ENCODE measurements at regions of chr1 and their contacts with region 1.

Region 1: DNA sequence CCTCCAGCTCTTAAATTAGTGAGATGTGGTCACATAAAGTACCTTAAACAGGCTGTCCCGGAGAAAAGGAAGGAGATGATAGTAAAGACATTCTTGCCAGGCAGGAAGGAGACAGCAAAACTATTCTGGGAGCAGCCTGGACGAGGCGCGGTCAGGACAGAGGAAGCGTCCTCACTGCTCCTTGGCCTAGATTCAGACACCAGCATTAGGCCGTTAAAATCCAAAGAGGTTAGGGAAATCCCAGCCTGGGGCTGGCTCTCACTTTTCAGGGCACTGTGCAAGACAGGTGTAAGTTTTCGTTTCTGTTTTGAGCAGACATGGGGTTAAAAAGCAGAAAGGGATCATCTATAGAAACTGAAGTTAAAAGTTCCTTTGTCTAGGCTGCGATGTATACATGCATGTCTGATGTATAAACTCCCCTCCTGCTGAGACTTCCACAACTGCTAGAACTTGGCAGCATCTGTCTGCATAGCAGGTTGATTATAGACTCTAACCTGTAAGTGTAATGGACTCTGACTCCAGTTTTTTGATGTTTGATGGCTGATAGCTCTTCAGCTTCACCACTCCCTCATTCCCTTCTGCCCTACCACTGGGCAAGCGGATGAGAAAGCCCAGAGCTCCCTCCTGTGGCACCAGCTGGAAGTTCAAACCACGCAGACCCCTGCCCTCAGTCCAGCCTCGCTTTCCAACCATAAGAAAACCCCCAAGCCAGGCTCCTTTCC is 21.5 kb downstream of the STPG1 start:
- DNase-seq: peak; percentile 84
- ATAC-seq: peak; percentile 91
- H3K4me3 Mint-ChIP-seq: no peak overlapping the region
- H3K27ac Mint-ChIP-seq: no peak overlapping the region
- H3K4me1 Mint-ChIP-seq: peaks cover 34% of the 10 kb centered on the region
- H3K27me3 Mint-ChIP-seq: no peaks in the 10 kb centered on the region
- CTCF ChIP-seq: peak; percentile 72

Region 2: GRCh38 chr1:24070821-24071393 is 321.1 kb before region 1 on chr1:
- CTCF ChIA-PET with region 1: interaction called, 18 read pairs
- POLR2A ChIA-PET with region 1: no interaction called
- DNase-seq: peak; percentile 85
- ATAC-seq: peak; percentile 91
- H3K4me3 Mint-ChIP-seq: peak overlapping the region; percentile 50
- H3K27ac Mint-ChIP-seq: no peak overlapping the region
- H3K4me1 Mint-ChIP-seq: peaks cover 6% of the 10 kb centered on the region; the same call in 1 of the 2 replicates
- H3K27me3 Mint-ChIP-seq: no peaks in the 10 kb centered on the region; the same call in 1 of the 2 replicates
- CTCF ChIP-seq: peak; percentile 77

Region 3: GRCh38 chr1:24186993-24187805 is 204.8 kb before region 1 on chr1 and contains the start of gene IFNLR1:
- CTCF ChIA-PET with region 1: interaction called, 28 read pairs
- POLR2A ChIA-PET with region 1: no interaction called
- DNase-seq: peak; percentile 80
- ATAC-seq: peak; percentile 87
- H3K4me3 Mint-ChIP-seq: peak within 1 kb of the TSS; percentile 78
- H3K27ac Mint-ChIP-seq: peak within 1 kb of the TSS; percentile 79
- H3K4me1 Mint-ChIP-seq: peaks cover 22% of the 10 kb centered on the region
- H3K27me3 Mint-ChIP-seq: no peaks in the 10 kb centered on the region; the same call in 1 of the 2 replicates
- CTCF ChIP-seq: no peak
- total RNA-seq, gene IFNLR1: 6.6 to 7.9 TPM (median 7.7 TPM) in 3 replicates

Region 4: GRCh38 chr1:24308365-24309015 is 83.6 kb before region 1 on chr1:
- CTCF ChIA-PET with region 1: interaction called, 32 read pairs
- POLR2A ChIA-PET with region 1: no interaction called
- DNase-seq: peak; percentile 49
- ATAC-seq: peak; percentile 86
- H3K4me3 Mint-ChIP-seq: no peak overlapping the region
- H3K27ac Mint-ChIP-seq: 0 out of 2 replicates have a peak overlapping the region, but pooled peaks have one; percentile 29
- H3K4me1 Mint-ChIP-seq: peaks cover 64% of the 10 kb centered on the region
- H3K27me3 Mint-ChIP-seq: no peaks in the 10 kb centered on the region
- CTCF ChIP-seq: no peak

Region 5: GRCh38 chr1:24321697-24322469 is 70.2 kb before region 1 on chr1:
- CTCF ChIA-PET with region 1: interaction called, 15 read pairs
- POLR2A ChIA-PET with region 1: no interaction called
- DNase-seq: peak; percentile 65
- ATAC-seq: peak; percentile 25
- H3K4me3 Mint-ChIP-seq: peak overlapping the region; percentile 86
- H3K27ac Mint-ChIP-seq: no peak overlapping the region
- H3K4me1 Mint-ChIP-seq: peaks cover 51% of the 10 kb centered on the region
- H3K27me3 Mint-ChIP-seq: peaks cover 46% of the 10 kb centered on the region
- CTCF ChIP-seq: no peak

Region 6: DNA sequence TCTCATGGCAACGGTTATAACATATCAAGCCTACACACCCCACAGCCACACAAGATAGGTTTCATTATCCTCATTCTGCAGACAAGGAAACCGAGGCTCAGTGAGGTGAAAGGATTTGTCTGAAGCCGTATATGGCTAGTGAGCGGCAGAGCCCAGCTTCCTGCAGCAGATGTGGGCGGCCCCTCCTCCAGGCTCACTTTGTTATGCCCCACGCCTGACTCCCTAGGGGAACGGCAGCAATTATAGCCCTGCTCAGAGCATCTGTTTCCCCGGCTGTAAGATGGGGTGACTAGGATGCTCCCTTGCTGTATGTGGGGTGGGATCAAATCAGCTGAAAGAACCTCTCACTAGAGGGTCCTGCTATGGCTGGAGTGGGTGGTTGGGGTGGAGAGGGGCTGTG is 50.8 kb before region 1 on chr1:
- CTCF ChIA-PET with region 1: interaction called, 10 read pairs
- POLR2A ChIA-PET with region 1: no interaction called
- DNase-seq: no peak
- ATAC-seq: peak; percentile 71
- H3K4me3 Mint-ChIP-seq: no peak overlapping the region
- H3K27ac Mint-ChIP-seq: no peak overlapping the region
- H3K4me1 Mint-ChIP-seq: peaks cover 54% of the 10 kb centered on the region
- H3K27me3 Mint-ChIP-seq: no peaks in the 10 kb centered on the region; the same call in 1 of the 2 replicates
- CTCF ChIP-seq: no peak

Region 7: DNA sequence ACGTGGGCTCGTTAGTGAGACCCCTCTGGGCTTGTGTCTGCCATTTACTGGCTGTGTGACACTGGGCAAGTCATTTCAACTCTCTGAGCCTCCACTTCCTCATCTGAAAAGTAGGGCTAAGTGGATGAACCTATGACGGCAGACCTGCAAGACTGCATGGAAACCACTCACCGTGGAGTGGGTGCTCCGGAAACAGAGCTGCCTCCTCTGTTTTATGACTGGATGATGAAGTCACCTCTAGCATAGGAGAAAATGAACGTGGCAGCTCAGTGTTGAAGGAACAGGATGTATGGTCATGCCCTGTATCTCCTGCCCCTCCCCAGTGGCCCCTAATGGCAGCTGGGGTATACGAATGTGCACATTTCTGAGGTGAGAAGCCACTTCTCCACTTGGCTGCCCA is 19.0 kb before region 1 on chr1:
- CTCF ChIA-PET with region 1: interaction called, 12 read pairs
- POLR2A ChIA-PET with region 1: no interaction called
- DNase-seq: no peak
- ATAC-seq: no peak
- H3K4me3 Mint-ChIP-seq: no peak overlapping the region
- H3K27ac Mint-ChIP-seq: no peak overlapping the region
- H3K4me1 Mint-ChIP-seq: peaks cover 24% of the 10 kb centered on the region
- H3K27me3 Mint-ChIP-seq: no peaks in the 10 kb centered on the region
- CTCF ChIP-seq: no peak

Region 8: DNA sequence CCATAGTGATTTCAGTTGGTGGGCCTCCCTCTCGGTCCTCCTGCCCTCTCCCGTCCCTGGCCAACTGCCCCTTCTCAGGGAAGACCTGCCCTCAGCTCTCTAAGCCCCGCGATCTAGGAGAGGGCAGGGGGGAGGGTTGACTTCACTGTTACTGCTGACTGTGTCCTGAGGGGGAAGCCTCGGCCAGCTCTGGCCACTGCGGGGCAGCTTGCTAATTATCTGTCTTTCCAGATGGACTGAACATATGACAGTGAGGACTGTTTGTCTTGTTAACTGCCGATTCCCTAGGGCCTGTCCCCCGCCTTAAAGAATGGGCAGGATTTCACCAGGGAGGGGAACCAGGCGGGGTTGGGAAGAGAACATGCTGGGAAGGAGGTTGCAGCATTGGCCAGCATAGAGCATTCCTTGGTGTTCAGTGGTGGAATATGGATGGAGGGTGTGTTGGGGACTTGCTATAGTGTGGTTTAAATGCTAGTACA is 46.4 kb after region 1 on chr1:
- CTCF ChIA-PET with region 1: no interaction called
- POLR2A ChIA-PET with region 1: no interaction called
- DNase-seq: no peak
- ATAC-seq: peak; percentile 75
- H3K4me3 Mint-ChIP-seq: no peak overlapping the region
- H3K27ac Mint-ChIP-seq: peak overlapping the region; percentile 53; the same call in 1 of the 2 replicates
- H3K4me1 Mint-ChIP-seq: peaks cover 14% of the 10 kb centered on the region
- H3K27me3 Mint-ChIP-seq: no peaks in the 10 kb centered on the region
- CTCF ChIP-seq: no peak

Region 9: DNA sequence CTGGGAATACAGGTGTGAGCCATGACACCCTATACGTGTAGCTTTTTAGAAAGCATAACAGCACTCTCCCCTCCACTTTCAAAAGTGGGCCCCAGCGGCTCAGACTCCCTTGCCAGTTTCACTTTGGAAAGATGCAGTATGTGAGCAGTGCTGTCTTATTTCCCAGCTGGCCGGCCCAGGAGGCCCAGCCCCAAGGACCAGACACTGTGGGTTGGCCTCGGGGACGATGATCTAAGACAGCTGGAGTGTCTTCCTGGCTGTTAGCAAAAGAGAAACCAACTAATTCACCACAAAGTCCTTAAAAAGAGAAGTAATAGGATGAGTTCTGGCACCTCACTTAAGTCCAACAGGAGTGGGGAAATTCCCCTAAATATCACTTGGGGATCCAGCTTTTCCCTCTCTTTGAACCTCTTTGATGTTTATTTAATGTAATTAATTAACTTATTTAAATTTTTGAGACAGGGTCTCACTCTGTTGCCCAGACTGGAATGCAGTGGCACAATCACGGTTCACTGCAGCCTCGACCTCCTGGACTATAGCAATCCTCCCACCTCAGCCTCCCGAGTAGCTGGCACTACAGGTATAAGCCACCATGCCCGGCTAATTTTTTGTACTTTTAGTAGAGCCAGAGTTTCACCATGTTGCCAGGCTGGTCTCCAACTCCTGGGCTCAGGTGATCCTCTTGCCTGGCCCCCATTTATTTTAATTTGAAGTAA is 335.6 kb after region 1 on chr1:
- CTCF ChIA-PET with region 1: no interaction called
- POLR2A ChIA-PET with region 1: no interaction called
- DNase-seq: no peak
- ATAC-seq: no peak
- H3K4me3 Mint-ChIP-seq: no peak overlapping the region
- H3K27ac Mint-ChIP-seq: no peak overlapping the region
- H3K4me1 Mint-ChIP-seq: peaks cover 52% of the 10 kb centered on the region
- H3K27me3 Mint-ChIP-seq: no peaks in the 10 kb centered on the region
- CTCF ChIP-seq: no peak

Measured in WTC11 (cell line).